ENCODE measurements at regions of chr19 and their contacts with region 1.

Region 1: DNA sequence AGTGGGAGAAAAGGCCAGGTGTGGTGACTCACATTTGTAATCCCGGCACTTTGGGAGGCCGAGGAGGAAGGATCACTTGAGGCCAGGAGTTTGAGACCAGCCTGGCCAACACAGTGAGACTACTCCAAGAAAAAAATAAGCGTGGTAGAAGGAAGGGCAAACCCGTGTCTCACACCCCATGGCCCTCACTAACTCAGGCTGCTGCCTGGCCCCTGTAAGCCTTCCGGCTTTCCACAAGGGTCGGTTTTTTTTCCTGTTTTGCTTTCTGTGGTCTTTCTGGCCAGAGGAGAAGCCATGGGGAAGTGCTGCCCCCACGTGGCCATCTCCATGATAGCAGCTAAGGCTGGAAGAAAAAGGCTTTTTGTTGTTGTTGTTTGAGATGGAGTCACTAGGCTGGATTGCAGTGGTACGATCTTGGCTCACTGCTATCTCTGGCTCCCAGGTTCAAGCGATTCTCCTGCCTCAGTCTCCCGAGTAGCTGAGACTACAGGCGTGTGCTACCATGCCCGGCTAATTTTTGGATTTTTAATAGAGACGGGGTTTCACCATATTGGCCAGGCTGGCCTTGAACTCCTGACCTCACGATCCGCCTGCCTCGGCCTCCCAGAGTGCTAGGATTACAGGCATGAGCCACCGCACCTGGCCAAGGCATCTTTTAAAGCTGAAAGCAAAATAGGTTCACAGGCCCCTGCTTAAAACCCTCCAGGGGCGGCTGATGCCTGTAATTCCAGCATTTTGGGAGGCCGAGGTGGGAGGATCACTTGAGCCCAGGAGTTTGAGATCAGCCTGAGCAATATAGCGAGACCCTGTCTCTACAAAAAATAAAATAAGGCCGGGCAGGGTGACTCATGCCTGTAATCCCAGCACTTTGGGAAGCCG is 7.5 kb upstream of the ARHGEF18 start:
- DNase-seq: peak; percentile 73
- ATAC-seq: peak; percentile 83
- H3K4me3 ChIP-seq: peak overlapping the region in 1 of 3 experiments; percentile 32; a peak in 1 of 6 replicates
- H3K27ac ChIP-seq: no peak overlapping the region
- H3K4me1 ChIP-seq: peaks cover 35% of the 10 kb centered on the region
- H3K27me3 ChIP-seq: peaks cover under 1 to 9% of the 10 kb centered on the region in 2 experiments; a peak in 3 of 5 replicates
- CTCF ChIP-seq: peak; percentile 95
- EP300 ChIP-seq: no peak
- POLR2A ChIP-seq: no peak
- RAD21 ChIP-seq: peak; percentile 91

Region 2: DNA sequence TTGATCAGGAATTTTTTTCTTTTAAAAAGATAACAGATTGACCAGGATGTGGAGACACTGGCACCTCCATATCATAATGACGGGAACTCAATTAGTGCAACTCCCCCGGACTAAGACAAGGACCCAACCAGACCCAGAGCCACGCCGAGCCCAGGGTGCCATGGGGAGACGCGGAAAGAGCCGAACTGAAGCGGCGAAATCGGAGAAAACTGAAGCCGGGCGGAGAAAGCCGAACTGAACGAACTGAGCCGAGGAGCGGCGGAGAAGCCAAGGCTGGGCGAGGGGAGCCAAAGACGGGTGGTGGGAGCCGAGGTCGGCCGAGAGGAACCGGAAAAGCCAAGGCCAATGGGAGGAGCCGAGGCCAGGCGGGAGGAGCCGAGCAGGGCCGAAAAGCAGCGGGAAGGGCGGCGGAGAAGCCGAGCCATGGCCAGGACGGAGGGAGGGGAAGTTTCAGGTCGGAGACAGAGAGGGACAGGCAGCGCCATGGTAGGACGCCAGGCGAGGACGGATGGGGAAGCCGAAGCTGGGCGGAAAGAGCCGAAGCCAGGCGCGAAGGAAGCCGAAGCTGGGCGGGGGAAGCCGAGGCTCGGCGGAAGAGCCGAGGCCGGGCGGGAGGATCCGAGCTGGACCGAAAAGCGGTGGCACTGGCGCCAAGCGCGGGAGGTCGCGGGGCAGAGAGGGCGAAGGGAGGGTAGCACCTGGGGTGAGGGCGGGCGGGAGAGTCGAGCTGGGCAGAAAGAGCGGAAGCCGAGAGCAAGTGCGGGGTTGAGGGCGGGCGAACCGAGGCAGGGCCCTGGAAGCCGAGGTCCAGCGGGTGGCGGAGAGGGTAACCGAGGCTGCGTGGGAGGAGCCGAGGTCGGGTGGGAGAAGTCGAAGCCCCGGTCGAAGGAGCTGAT is 242.2 kb before region 1 on chr19:
- CTCF ChIA-PET with region 1: interaction called, 19 read pairs
- POLR2A ChIA-PET with region 1: no interaction called
- in situ Hi-C with region 1: loop called (anchors 10 kb)
- intact Hi-C with region 1: loop called (anchors 1 kb)
- DNase-seq: peak; percentile 80
- ATAC-seq: peak; percentile 95
- H3K4me3 ChIP-seq: peak overlapping the region; percentile 66 to 83 (median 77)
- H3K27ac ChIP-seq: peak overlapping the region; percentile 82
- H3K4me1 ChIP-seq: peaks cover 37% of the 10 kb centered on the region
- H3K27me3 ChIP-seq: no peaks in the 10 kb centered on the region
- CTCF ChIP-seq: peak; percentile 27; the same call in 1 of the 2 replicates
- EP300 ChIP-seq: no peak
- POLR2A ChIP-seq: peak; percentile 65 to 71
- RAD21 ChIP-seq: no peak

Region 3: DNA sequence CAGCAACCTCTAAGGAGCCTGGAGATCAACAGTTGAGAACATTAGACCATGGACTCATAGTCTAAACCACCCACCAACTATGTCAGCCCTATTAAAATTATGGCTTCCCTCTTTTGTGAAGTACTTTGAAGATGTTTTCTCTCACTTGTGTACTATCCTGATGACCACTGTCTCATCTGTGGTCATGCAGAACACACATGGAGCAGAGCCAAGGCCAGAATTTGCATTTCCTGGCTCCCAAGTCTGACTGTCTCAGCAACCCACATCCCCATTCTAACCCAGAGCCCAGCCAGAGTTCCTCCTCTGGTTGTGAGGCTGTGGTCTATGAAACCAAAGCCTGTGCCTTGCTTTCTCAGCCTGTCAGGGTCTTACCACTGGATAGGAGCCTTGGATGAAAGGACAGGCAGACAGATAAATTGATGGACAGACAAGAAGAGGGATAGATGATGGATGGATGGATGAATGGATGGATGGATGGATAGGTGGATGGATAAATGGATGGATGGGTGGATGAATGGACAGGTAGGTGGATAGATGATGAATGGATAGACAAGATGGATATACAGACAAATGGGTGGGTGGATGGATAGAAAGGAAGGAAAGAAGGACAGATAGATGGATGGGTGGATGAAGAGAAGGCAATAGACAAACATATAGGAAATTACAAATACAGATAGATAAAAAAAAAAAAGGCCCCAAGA is 236.3 kb before region 1 on chr19:
- CTCF ChIA-PET with region 1: interaction called, 19 read pairs
- POLR2A ChIA-PET with region 1: no interaction called
- in situ Hi-C with region 1: loop called (anchors 10 kb)
- intact Hi-C with region 1: loop called (anchors 1 kb)
- DNase-seq: no peak
- ATAC-seq: no peak
- H3K4me3 ChIP-seq: no peak overlapping the region
- H3K27ac ChIP-seq: no peak overlapping the region
- H3K4me1 ChIP-seq: peaks cover 29% of the 10 kb centered on the region
- H3K27me3 ChIP-seq: no peaks in the 10 kb centered on the region
- CTCF ChIP-seq: no peak
- EP300 ChIP-seq: no peak
- POLR2A ChIP-seq: no peak
- RAD21 ChIP-seq: no peak

Region 4: GRCh38 chr19:7145494-7146485 is 195.4 kb before region 1 on chr19:
- CTCF ChIA-PET with region 1: interaction called, 32 read pairs
- POLR2A ChIA-PET with region 1: no interaction called
- in situ Hi-C with region 1: loop called (anchors 5 kb)
- intact Hi-C with region 1: loop called (anchors 2 kb)
- DNase-seq: peak; percentile 58
- ATAC-seq: no peak; the same call in 2 of the 3 replicates
- H3K4me3 ChIP-seq: no peak overlapping the region
- H3K27ac ChIP-seq: no peak overlapping the region
- H3K4me1 ChIP-seq: no peaks in the 10 kb centered on the region
- H3K27me3 ChIP-seq: no peaks in the 10 kb centered on the region
- CTCF ChIP-seq: no peak
- EP300 ChIP-seq: no peak
- POLR2A ChIP-seq: no peak
- RAD21 ChIP-seq: no peak

Region 5: GRCh38 chr19:7197760-7198696 is 143.2 kb before region 1 on chr19:
- CTCF ChIA-PET with region 1: no interaction called
- POLR2A ChIA-PET with region 1: no interaction called
- in situ Hi-C with region 1: no loop called
- intact Hi-C with region 1: loop called (anchors 5 kb)
- DNase-seq: peak; percentile 86
- ATAC-seq: peak; percentile 84
- H3K4me3 ChIP-seq: peak overlapping the region; percentile 57 to 79 (median 74)
- H3K27ac ChIP-seq: peak overlapping the region; percentile 79
- H3K4me1 ChIP-seq: peaks cover 60% of the 10 kb centered on the region
- H3K27me3 ChIP-seq: no peaks in the 10 kb centered on the region
- CTCF ChIP-seq: peak; percentile 13; the same call in 1 of the 2 replicates
- EP300 ChIP-seq: 0 out of 4 replicates have a peak, but pooled peaks of 1 of the 2 experiments have one; percentile 18
- POLR2A ChIP-seq: peak; percentile 71 to 84
- RAD21 ChIP-seq: peak; percentile 31; the same call in 1 of the 2 replicates

Measured in HepG2 (cell line).